ENCODE measurements at regions of chr14 and their contacts with region 1.

Region 1: DNA sequence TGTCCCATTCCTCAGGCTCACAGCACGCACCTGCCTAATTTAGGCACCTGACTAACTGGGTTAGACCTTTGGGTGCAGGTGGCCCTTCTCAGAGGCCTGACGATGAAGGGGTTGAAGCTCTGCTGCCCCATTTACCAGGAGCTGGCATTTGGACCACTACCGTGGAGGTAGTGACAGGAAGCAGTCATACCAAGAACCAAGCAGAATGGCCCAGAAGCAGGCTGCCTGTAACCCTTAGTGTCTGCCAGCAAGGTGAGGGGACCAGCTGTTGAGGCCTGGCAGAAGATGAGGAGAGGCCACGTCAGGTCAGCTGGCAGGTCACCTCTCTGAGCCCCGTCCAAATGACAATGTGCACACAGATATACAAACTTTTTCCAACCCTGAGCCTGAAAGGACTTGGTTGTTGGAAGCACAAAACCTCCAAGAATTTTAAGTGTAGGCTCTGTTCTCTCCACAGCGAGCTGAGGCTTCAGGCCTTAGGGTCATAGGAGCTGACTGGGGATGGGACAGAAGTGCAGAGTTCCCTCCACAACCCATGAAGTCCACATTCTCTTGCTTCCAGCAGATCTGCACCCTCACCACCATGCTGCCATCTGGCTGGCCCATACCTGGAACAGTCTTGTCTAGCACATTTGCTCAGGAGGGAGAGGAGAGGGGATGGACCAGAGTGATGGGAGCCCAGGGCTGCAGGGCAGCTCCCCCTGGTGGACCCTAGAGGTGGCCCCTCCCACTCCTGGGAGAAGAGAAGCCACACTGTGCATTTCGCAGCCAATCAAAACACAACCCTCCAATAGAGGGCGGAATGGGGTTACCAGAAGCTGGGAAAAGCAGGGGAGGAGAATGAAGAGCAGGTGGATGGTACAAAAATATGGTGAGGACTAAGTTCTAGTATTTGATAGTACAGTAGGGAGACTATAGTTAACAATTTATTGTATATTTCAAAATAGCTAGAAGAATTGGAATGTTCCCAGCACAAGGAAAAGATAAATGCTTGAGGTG is 23.3 kb downstream of the VASH1 start:
- DNase-seq: peak; percentile 88
- H3K4me3 Mint-ChIP-seq: no peak overlapping the region
- H3K27ac Mint-ChIP-seq: peak overlapping the region; percentile 20
- H3K4me1 Mint-ChIP-seq: peaks cover 38% of the 10 kb centered on the region
- H3K27me3 Mint-ChIP-seq: no peaks in the 10 kb centered on the region

Region 2: DNA sequence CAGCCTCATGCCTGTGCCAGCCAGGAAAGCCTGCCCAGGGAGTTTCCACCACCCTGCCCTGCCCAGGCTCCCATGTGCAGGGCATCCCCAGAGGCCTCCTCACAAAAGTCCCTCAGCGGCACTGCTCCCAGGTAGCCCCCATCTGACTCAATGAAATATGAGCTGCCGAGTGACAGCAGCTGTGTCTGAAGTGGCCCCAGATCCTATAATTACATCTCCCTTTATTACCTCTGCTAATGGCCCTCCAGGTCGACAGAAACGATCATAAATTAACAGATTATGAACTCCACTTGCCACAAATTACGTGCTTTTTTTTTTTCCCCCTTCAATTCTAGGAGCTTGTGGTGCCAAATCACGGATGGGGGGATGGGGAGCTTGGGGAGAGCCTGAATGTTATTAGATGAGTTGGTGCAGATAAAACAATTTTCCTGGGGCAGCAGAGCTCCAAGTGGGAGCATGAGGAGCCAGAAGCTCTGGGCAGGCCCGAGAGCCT is 298.3 kb before region 1 on chr14:
- intact Hi-C with region 1: no loop called
- DNase-seq: no peak
- H3K4me3 Mint-ChIP-seq: no peak overlapping the region
- H3K27ac Mint-ChIP-seq: no peak overlapping the region
- H3K4me1 Mint-ChIP-seq: no peaks in the 10 kb centered on the region
- H3K27me3 Mint-ChIP-seq: no peaks in the 10 kb centered on the region

Region 3: DNA sequence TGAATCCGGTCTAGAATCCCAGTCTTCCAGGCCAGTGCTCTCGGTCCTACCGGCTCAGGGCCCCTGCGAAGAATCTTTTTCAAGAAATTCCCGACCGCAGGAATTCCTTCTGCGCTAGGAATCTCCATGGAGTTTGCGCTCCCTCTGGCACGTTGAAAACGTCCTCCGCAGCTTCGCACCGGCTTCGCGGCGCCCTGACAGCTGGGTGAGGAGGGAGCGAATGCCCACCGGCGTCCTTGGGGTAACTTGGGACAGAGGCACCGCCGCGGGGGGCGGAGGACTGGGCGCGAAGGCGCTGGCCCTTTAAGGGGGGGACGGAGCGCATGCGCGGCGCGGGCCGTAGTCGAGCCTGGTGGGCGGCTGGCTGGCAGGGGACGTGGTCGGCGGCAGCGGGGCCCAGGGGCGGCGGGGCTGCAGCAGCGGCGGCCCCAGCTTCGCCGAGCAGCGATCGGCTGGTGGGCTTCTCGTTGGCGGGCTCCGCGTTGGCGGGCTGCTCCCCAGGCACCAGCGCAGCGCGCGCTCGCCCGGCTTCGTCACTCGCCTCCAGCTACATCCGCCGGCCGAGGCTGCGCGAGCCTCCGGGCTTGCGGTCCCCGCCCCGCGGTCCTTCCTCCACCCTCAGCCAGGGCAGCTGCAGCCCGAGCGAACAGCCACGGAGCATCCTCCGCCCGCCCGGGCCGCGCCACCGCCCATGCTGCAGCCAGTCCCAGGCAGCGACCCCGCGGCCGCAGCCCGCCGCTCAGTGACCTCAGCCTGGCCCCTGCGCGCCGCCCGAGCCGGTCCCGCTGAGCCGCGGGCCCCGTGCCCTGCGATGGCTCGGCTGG is 23.2 kb before region 1 on chr14 and contains the start of gene VASH1:
- intact Hi-C with region 1: loop called (anchors 2 kb)
- DNase-seq: peak; percentile 90
- H3K4me3 Mint-ChIP-seq: peak within 1 kb of the TSS; percentile 84
- H3K27ac Mint-ChIP-seq: peak within 1 kb of the TSS; percentile 66
- H3K4me1 Mint-ChIP-seq: peaks cover 13% of the 10 kb centered on the region
- H3K27me3 Mint-ChIP-seq: peaks cover 60% of the 10 kb centered on the region
- total RNA-seq, gene VASH1: 5.8 and 6.9 TPM in 2 replicates

Region 4: DNA sequence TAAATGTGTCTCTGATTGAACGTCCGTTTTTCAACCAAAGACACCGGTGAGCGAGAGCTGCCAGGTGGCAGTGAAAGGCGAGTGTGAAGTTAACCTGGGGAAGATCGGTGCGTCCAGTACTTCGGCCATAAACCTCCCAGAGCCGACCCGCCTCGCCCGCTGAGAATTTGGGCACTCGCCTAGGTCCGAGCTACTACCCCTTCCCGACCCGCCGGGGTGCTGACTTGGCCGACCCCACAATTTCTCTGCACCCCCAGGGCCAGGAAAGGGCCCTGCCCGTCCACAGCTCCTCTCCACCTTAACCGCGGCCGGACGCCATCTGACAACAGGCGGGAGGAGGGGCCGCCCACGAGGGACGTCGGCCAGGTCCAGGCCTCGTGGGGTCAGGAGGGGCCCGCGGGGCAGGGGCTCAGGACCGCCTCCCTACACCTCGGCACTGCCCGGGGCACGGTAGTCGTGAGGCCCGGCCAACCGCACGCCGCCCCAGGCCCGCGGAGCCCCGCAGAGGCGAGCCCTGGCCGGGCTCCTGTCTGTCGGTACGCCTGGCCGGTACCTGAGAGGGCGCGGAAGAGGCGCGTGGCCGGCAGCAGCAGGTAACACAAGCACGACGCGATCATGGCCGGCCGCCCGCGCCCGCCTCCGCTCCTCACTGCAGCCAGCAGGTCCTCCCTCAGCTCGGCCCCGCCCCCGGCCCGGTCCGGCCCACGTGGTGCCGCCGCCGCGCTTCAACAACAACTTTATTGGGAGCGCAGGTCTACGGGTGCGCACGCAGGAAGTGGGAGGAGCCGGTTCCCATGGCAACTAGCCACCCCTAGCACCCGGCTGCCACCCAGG is 27.9 kb after region 1 on chr14 and contains the start of gene ANGEL1:
- intact Hi-C with region 1: loop called (anchors 2 kb)
- DNase-seq: peak; percentile 99
- H3K4me3 Mint-ChIP-seq: peak within 1 kb of the TSS; percentile 98
- H3K27ac Mint-ChIP-seq: peak within 1 kb of the TSS; percentile 91
- H3K4me1 Mint-ChIP-seq: peaks cover 21% of the 10 kb centered on the region
- H3K27me3 Mint-ChIP-seq: no peaks in the 10 kb centered on the region
- total RNA-seq, gene ANGEL1: 16.4 and 17.2 TPM in 2 replicates

Measured in activated CD4-positive, alpha-beta T cell treated with anti-CD3 and anti-CD28 coated beads, Interleukin-2, amount 10 ng/mL, durations not matched to agents 24 days and 14 days (primary cell).